Left colon (tissue), 2 donors: ENCODE measurements at regions of chr13 and their contacts with region 1.

Region 1: GRCh38 chr13:73835138-73835721 is 299.0 kb downstream of the KLF12 start:
- DNase-seq: no peak
- ATAC-seq: peak; percentile 59

Region 2: DNA sequence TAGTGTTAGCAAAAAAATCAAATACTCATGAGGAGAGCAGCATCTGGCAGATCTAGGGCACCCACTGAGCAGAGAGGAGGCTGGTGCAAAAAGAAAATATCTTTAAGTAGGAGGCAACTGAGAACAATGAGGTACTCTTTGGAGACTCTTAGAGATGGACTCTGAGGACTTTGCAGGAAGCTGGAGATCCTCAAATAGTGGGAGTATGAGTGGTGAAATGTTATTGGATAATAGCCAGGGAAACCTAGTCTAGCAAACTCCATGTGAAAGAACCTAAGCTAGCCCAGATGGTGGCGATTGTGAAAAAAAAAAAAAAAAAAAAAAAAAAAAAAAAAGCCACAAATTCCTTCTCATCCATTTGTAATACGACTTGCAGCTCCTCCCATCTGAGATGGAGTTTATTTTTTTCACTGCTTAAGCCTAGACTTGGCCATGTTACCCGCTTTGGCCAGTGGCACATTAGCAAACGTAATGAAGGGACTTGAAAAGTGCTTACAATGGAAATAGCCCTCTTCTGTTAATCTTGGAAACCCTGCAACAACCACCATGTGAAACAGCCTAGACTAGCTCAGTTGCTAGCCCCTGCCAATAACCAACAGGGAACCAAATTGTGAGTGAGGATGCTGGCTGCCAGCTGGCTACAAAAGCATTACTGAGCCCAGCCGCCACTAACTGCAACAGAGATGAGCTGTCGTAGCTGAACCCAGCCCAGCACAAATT is 177.2 kb before region 1 on chr13:
- intact Hi-C with region 1: no loop called
- DNase-seq: no peak
- ATAC-seq: peak; percentile 2

Region 3: DNA sequence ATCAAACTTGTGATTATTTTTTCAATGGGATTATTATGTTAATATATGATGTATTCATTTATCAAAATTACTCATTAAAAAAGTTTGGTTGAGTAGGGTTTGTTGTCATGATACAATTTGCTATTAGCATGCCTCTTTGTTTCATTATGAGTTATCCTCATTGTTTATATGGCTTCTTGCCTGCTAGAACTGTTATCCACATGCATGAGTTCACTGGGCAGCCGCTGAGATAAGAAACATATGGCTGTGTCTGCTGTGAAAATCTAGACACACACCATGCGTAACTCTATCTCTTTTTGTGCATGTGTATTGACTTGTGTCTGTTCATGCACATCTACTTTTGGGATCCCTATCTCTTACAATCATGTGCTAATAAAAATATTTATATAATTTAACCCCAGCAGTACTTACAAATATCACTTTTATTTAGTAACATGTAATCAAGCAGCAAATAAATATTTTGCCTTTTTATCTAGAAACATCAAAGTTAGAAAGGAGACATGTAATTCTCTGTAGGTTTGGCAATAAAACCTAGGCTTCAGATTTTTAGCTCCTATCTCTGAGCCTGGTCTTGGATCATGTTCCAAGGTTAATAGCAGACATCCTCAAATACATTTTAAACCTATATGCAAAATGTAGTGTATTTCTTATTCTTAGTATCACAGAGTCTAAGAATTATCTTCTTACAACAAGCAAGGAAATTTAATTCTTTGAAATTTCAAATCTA is 310.2 kb after region 1 on chr13:
- intact Hi-C with region 1: loop called in 1 of 2 experiments (anchors 10 kb)
- DNase-seq: no peak
- ATAC-seq: no peak

Region 4: GRCh38 chr13:74287724-74288169 is 452.5 kb after region 1 on chr13:
- intact Hi-C with region 1: loop called in 1 of 2 experiments (anchors 10 kb)
- DNase-seq: peak; percentile 79 to 88
- ATAC-seq: peak; percentile 80

Region 5: DNA sequence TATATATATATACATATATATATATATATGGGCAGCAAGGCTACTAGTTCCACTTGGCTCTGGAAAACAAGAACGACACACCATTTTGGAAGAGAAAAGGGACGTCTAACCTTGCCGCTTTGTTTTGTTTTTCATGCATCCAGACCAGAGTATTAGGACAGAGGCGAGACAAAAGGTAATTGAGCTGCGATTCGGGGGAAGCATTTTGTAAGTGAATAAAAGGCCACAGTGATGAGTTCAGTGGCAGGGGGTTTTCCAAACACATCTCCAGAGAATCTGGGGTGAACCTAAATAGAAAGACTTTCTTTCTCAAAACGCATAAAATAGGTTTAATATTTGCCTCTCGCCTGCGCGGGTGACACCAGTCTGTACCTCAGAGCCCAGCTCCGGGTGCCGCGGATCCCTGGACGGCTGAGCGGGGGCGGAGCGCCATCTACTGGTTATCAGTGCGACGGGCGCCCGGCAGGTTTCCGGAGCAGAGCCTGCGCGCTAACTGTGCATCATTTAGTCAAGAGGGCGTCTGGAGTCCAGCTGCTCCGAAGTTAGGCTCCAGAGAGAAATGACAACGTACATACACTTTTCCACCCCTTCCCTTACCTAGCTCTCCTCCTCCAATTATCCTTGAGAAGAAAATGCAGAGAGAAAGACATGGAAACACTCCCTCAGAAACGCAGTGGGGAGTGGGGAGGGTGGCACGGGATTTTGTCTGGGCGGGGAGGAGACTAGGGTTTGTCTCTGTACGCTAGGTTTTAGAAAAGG is 1384.4 kb after region 1 on chr13:
- intact Hi-C with region 1: loop called in 1 of 2 experiments (anchors 10 kb)
- DNase-seq: peak; percentile 45 to 85
- ATAC-seq: peak; percentile 97